Activated CD4-positive, alpha-beta T cell treated with anti-CD3 and anti-CD28 coated beads, Interleukin-2, amount 10 ng/mL, durations not matched to agents 24 days and 14 days (primary cell): ENCODE measurements at regions of chr7 and their contacts with region 1.

Region 1: GRCh38 chr7:2241580-2242540 is at the starts of genes MRM2 and NUDT1:
- DNase-seq: peak; percentile 95
- H3K4me3 Mint-ChIP-seq: peak within 1 kb of the TSS; percentile 96
- H3K27ac Mint-ChIP-seq: peak within 1 kb of the TSS; percentile 89
- H3K4me1 Mint-ChIP-seq: peaks cover 11% of the 10 kb centered on the region
- H3K27me3 Mint-ChIP-seq: no peaks in the 10 kb centered on the region
- total RNA-seq, gene MRM2: 47.2 and 47.9 TPM in 2 replicates
- total RNA-seq, gene NUDT1: 69.9 and 81.6 TPM in 2 replicates

Region 2: GRCh38 chr7:2209146-2209960 is 32.5 kb before region 1 on chr7:
- intact Hi-C with region 1: no loop called
- DNase-seq: peak; percentile 81
- H3K4me3 Mint-ChIP-seq: no peak overlapping the region
- H3K27ac Mint-ChIP-seq: peak overlapping the region; percentile 49
- H3K4me1 Mint-ChIP-seq: peaks cover 3% of the 10 kb centered on the region
- H3K27me3 Mint-ChIP-seq: no peaks in the 10 kb centered on the region

Region 3: DNA sequence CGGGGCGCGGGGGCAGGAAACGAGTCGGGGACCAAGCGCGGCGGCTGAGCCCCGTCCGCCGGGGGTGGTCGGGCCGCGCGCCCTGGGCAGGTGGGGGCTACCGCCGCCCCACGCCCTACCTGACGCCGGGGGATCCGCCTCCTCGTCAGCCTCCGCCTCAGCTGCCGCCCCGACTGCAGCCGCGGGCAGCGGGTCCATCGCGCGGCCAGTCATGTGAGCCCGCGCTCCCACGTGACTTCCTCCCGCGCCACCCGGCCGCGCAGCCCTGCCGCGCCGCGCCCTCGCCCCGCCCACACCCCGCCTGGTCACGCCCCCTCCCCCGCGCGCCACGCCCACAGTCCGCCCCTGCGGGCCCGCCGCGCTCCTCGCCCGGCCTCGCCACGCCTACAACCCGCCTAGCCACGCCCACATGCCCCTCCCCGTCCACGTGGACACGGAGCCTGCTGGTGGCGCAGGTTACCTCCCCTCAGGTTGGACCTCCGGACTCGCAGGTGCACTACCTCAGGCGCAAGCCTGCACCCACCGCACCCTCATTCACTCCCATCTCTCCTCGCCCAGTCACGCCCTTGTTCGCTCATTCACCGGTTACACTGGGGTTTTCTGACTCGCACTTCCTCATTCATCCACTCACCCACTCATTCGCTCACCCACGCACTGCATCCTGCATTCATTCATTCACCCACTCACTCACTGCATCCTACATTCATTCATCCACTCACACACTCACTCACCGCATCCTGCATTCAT is 72.5 kb after region 1 on chr7 and contains the start of gene SNX8:
- intact Hi-C with region 1: loop called (anchors 2 kb)
- DNase-seq: peak; percentile 99
- H3K4me3 Mint-ChIP-seq: no peak within 1 kb of the TSS
- H3K27ac Mint-ChIP-seq: peak within 1 kb of the TSS; percentile 86
- H3K4me1 Mint-ChIP-seq: peaks cover 12% of the 10 kb centered on the region
- H3K27me3 Mint-ChIP-seq: no peaks in the 10 kb centered on the region
- total RNA-seq, gene SNX8: 42.2 and 42.4 TPM in 2 replicates